Activated CD4-positive, alpha-beta memory T cell treated with anti-CD3 and anti-CD28 coated beads for 36 hours (primary cell): ENCODE measurements at regions of chr11 and their contacts with region 1.

Region 1: DNA sequence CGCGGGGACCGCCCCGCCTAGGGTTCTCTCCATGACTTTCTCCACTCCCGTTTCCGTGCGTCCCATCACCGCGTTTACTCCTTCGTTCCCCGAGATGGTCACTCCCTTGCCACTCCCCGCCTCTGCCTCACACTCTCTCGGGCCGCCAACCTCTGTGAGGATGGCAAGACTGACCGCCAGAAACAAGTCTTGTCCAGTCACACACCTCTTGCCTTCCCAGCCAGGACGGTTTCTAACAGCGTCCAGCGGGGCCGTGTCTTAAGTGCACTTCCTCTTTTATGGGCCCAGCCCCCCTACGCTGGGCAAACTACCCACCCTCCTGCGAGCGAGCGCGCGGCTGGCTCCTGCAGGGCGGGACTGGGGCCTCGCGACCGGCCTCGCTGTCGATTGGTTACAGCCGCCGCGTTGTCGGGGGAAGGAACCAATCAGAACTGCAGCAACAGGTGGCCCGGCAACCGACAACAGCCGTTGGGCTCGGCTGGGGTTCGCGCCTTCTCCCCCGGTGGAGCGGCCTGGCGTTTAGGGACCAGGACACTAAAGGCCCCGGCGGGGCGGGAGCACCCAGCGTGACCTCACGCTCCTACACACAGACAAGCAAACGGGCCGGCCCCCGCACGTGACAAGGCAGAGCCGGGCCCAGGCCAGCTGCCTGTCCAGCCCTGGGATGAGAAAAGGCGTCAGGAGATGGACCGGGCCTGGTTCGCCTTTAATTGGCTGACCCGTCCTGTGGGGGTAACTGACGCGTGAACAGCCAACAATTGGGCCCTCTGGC is 512 bp upstream of the UCP2 start:
- DNase-seq: peak; percentile 97
- H3K4me3 Mint-ChIP-seq: peak overlapping the region; percentile 91
- H3K27ac Mint-ChIP-seq: peak overlapping the region; percentile 97
- H3K4me1 Mint-ChIP-seq: peaks cover 43% of the 10 kb centered on the region
- H3K27me3 Mint-ChIP-seq: no peaks in the 10 kb centered on the region

Region 2: GRCh38 chr11:73787643-73788537 is 195.3 kb before region 1 on chr11 and contains the start of gene MRPL48:
- CTCF ChIA-PET with region 1: no interaction called
- POLR2A ChIA-PET with region 1: interaction called, 3 read pairs
- intact Hi-C with region 1: loop called (anchors 5 kb)
- DNase-seq: peak; percentile 94
- H3K4me3 Mint-ChIP-seq: peak within 1 kb of the TSS; percentile 99
- H3K27ac Mint-ChIP-seq: peak within 1 kb of the TSS; percentile 97
- H3K4me1 Mint-ChIP-seq: peaks cover 18% of the 10 kb centered on the region
- H3K27me3 Mint-ChIP-seq: no peaks in the 10 kb centered on the region
- total RNA-seq, gene MRPL48: 43.4 to 45.7 TPM

Region 3: DNA sequence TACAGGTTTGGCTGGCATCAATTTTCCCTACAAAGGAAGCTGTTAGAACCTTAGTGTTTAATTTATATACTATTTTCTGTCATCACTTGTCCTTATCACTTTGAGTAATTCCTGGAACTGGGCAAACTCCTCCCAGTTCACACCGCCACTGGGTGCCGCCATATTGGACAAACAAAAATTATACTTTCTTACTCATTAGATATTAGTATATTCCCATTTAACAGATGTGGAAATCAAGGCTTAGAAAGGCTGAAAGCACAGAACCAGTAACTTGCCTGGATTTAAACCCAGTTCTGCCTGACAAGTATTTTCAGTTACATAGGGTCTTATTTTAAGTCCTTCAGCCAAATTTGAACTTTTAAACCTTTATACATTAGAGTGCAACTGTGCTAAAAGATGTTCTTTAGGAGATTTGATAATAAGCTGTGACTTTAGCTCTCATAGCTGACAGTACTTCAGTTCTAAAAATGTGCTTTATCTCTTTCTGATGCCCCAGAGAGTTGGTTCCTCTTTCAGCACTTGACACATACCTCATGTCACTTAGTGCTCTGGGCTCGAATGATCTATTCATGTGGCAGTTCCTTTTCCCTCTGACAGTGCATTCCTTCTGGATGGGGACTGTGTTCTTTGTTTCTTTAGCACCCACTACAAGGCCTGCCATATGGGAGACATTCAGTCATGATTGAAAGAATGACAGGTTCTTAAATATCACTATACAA is 131.9 kb before region 1 on chr11:
- CTCF ChIA-PET with region 1: no interaction called
- POLR2A ChIA-PET with region 1: no interaction called
- intact Hi-C with region 1: no loop called
- DNase-seq: no peak
- H3K4me3 Mint-ChIP-seq: no peak overlapping the region
- H3K27ac Mint-ChIP-seq: no peak overlapping the region
- H3K4me1 Mint-ChIP-seq: no peaks in the 10 kb centered on the region
- H3K27me3 Mint-ChIP-seq: no peaks in the 10 kb centered on the region

Region 4: GRCh38 chr11:73965076-73965860 is 17.9 kb before region 1 on chr11:
- CTCF ChIA-PET with region 1: interaction called, 11 read pairs
- POLR2A ChIA-PET with region 1: interaction called, 82 read pairs
- intact Hi-C with region 1: loop called (anchors 1 kb)
- DNase-seq: no peak
- H3K4me3 Mint-ChIP-seq: no peak overlapping the region
- H3K27ac Mint-ChIP-seq: no peak overlapping the region
- H3K4me1 Mint-ChIP-seq: peaks cover 41% of the 10 kb centered on the region
- H3K27me3 Mint-ChIP-seq: no peaks in the 10 kb centered on the region

Region 5: DNA sequence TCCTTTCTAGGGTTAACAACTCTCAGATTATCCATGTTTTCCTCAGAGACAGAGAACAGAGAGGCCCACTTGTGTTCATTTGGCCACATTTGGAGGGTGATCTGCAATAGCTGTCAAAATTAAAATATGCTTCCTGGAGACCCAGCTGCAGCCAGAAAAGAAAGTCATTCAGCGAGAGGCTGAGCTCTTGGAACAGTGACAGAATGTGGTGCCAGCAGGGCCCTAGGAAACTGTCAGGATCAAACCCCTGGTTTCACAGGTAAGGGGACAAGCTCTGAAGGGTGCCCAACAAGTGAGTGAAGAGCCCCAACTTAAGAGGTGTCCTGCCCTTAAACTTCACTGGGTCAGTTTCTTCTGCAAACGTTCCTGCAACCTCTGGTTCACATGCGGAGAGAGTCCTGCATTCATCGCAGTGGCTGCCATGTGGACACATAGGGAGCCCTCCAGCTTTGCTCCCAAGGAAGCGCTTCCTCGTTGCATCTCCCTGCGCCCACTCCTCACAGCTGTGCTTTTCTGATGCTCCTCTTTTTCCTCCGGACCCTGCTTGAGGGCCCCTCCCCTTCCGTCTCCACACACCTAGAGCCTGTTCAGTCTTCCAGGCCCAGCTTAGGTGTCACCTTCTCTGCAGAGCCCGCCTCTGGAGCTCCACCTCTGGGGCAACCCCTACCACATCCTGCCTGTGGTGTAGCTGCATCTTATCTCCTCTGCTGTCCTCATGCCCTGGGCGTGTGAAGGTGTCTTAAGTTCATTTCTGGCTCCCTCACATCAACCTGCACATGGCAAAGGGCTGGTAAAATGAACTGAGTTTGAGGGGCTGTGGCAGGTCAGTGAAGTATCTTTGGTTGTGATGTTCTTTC is 21.8 kb after region 1 on chr11:
- CTCF ChIA-PET with region 1: interaction called, 6 read pairs
- POLR2A ChIA-PET with region 1: interaction called, 95 read pairs
- intact Hi-C with region 1: loop called (anchors 2 kb)
- DNase-seq: peak; percentile 92
- H3K4me3 Mint-ChIP-seq: peak overlapping the region; percentile 63
- H3K27ac Mint-ChIP-seq: peak overlapping the region; percentile 91
- H3K4me1 Mint-ChIP-seq: peaks cover 65% of the 10 kb centered on the region
- H3K27me3 Mint-ChIP-seq: no peaks in the 10 kb centered on the region

Region 6: DNA sequence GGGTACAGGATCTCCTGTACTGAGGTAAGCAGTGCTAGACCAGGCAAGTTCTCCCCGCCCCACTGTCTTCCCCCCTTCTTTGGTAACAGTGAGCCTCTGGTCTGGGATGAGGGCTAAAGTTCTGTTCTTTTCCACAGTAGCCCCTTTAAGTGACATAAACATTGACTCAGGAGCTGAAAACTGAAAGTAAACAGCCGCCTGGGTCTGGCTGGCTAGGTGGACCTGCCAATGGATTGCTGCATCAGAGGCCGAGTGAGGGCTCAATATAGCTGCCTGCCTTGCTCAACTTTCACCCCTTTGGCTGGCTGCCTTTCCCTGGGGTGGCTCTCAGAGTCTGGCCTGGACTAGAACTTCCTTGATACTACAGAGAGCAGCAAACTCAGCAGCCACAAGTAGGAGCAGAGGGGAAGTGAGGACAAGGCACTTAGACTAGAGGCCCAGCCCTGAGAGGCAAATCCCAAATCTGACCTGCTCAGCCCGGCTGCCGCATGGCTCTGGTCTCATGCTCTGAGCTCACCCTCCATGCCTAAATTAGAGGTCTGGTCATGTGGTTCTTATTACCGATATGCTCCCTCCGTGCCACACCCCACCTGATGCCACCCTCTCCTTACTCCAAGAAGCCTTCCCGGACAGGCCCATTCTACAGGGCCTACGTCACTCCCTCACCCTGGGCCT is 35.3 kb after region 1 on chr11:
- CTCF ChIA-PET with region 1: interaction called, 8 read pairs
- POLR2A ChIA-PET with region 1: interaction called, 95 read pairs
- intact Hi-C with region 1: loop called (anchors 1 kb)
- DNase-seq: no peak
- H3K4me3 Mint-ChIP-seq: no peak overlapping the region
- H3K27ac Mint-ChIP-seq: no peak overlapping the region
- H3K4me1 Mint-ChIP-seq: peaks cover 44% of the 10 kb centered on the region
- H3K27me3 Mint-ChIP-seq: no peaks in the 10 kb centered on the region

Region 7: DNA sequence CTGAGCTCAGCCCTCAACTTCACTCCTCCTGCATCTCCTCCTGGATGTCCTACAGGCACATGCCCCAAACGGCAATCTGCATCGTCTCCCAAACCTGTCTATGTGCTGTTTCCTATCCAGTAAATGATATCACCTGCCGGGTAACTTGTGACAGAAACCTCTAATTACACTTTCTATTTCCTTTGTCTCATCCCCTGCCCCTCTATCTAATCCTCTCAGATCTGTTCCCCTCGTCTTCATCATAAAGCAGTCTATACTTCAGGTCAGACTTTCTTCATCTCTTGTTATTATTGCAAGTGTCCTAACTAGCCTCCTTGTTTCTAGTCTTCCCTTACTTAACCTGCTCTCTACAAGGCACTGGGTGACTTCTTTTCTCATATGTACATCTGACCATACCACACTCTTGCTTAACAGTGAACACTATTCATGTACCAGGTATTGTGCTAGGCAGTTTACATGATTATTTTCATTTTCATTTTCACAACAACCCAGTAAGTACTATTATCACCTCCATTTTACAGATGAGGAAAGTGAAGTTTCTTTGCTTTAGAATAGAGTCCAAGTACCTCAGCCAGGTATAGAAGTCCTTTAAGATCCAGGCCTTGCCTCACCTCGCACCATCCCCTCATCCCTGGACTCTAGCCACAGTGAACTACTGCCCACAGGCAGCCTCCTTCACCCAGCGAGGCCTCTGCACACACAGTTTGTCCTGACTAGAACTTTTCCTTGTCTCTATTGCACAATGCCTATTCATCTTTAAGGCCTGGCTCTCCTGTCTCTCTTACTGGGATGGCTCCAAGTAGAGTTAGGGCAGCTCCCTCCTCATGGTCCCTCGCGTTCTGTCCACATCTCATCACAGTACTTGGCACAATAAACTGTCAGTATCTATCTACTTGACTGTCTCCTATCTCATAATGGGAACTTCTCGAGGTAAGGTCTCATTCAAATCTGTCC is 47.8 kb after region 1 on chr11:
- CTCF ChIA-PET with region 1: no interaction called
- POLR2A ChIA-PET with region 1: interaction called, 17 read pairs
- intact Hi-C with region 1: loop called (anchors 1 kb)
- DNase-seq: no peak
- H3K4me3 Mint-ChIP-seq: peak overlapping the region; percentile 57
- H3K27ac Mint-ChIP-seq: peak overlapping the region; percentile 77
- H3K4me1 Mint-ChIP-seq: peaks cover 41% of the 10 kb centered on the region
- H3K27me3 Mint-ChIP-seq: no peaks in the 10 kb centered on the region

Region 8: DNA sequence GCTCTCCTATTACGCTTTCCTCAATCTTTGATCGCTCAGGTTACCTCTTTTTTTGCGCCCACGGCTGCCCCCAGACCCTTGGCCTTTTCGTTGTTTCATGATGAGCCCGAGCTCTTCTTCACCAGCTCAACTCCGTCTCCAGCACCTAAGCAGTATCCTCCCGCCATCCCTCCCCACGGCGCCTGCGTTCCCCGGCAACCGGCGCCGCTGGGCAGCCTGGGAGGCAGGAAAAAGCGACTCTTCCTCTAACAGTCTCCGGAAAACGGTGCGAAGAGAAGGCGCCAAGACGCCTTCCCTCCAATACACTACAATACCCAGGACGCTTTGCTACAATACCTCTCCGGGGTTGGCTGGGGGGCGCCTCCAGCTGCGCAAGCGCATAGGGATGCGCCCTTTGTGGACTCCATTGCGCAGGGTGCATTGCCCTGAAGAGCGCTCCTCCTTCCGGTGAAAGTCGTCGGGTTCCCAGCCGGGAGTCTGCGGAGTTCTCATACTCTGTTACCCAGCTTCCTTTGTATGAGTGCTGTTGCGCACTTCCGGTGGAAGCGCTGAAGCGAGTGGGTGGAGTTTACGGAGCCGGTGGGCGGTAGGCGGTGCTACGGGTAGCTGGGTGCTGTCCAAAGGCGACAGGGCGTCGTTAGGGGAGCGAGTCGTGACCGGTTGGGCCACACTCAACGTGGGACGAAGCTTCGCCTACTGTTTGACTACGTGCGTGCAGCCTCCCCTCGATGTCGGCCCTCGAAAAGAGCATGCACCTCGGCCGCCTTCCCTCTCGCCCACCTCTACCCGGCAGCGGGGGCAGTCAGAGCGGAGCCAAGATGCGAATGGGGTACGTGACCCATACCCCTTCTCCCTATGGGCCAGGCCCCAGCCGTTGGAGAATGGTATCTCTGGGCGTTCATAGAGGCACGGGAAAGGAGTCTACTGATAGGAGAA is 187.8 kb after region 1 on chr11 and contains the starts of genes C2CD3 and PPME1:
- CTCF ChIA-PET with region 1: no interaction called
- POLR2A ChIA-PET with region 1: interaction called, 10 read pairs
- intact Hi-C with region 1: loop called (anchors 1 kb)
- DNase-seq: peak; percentile 99
- H3K4me3 Mint-ChIP-seq: no peak within 1 kb of the TSS
- H3K27ac Mint-ChIP-seq: no peak within 1 kb of the TSS
- H3K4me1 Mint-ChIP-seq: peaks cover 18% of the 10 kb centered on the region
- H3K27me3 Mint-ChIP-seq: no peaks in the 10 kb centered on the region
- total RNA-seq, gene C2CD3: 22.6 to 24.7 TPM
- total RNA-seq, gene PPME1: 37.9 to 38.5 TPM